Heart left ventricle (tissue), 16 donors: ENCODE measurements at regions of chr16 and their contacts with region 1.

Region 1: DNA sequence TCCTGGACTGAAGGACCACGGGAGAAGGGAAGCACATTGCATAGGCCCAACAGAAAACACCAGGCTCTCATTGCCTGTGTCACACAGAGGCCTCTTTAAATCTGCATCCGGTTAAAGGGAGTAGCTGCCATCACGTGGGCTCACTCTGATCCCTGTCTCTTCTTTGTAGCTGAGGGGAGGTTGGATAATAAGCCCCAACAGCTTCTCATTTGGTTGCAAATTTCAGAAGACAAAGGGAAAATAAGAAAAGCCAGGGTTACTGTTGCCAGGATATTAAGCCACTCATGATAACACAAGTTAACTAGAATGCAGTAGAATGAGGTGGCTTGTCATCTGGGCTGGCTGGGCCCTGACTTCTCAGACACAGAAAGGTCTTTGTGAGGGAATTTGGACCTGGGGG is 325.1 kb upstream of the ERCC4 start:
- DNase-seq: no peak
- ATAC-seq: no peak
- H3K4me3 ChIP-seq: no peak overlapping the region
- H3K27ac ChIP-seq: no peak overlapping the region
- H3K4me1 ChIP-seq: no peaks in the 10 kb centered on the region
- H3K27me3 ChIP-seq: no peaks in the 10 kb centered on the region
- CTCF ChIP-seq: no peak
- POLR2A ChIP-seq: no peak

Region 2: GRCh38 chr16:12803203-12804097 is 791.4 kb before region 1 on chr16 and contains the start of gene CPPED1:
- intact Hi-C with region 1: no loop called
- DNase-seq: peak; percentile 93 to 97 (median 97)
- ATAC-seq: peak; percentile 95 to 99 (median 98)
- H3K4me3 ChIP-seq: peak within 1 kb of the TSS; percentile 30 to 79 (median 67)
- H3K27ac ChIP-seq: peak within 1 kb of the TSS; percentile 43 to 96 (median 84)
- H3K4me1 ChIP-seq: peaks cover 0 to 51% (median 14%) of the 10 kb centered on the region in 12 donors
- H3K27me3 ChIP-seq: peaks cover 0 to 4% (median 0%) of the 10 kb centered on the region in 9 donors
- CTCF ChIP-seq: no peak
- POLR2A ChIP-seq: peak in 1 of 2 donors; percentile 48
- total RNA-seq, gene CPPED1: 5.6 to 25.1 (median 12.6) TPM

Region 3: DNA sequence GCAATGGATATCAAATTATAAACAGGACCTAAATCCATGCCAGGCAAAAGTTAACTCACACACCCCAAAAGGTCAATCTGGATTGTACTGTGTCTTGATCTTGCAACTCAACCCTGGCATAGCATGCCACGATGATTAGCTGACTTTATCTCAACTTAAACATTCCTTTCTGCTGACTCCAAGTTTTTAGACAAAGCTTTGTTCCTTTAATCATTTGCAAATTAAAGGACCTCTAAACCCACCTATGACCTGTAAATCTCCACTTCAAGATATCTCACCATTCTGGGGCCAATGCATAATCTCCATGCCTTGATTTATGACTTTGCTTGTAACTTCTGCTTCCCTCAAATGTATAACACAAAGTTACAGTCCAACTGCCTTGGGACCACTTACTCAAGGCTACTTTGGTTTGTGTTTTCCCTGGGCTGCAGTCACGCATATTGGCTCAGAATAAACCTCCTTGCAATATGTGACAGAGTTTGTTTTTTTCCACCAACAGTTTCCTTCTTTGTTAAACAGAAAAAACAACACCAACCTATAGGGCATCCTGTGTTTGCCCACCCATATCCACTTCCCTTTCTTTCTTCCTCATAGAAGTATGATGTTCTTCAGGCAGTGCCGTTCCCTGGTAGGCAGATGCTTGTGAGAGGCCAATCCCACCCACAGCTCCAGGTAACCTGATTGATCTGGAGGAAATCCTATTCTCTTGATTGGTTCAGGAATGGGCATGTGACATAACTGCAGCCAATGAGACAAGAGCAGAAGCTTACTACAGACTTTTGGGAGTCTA is 65.4 kb before region 1 on chr16:
- intact Hi-C with region 1: loop called in 1 of 10 experiments (anchors 10 kb)
- DNase-seq: no peak
- ATAC-seq: no peak
- H3K4me3 ChIP-seq: no peak overlapping the region
- H3K27ac ChIP-seq: no peak overlapping the region
- H3K4me1 ChIP-seq: no peaks in the 10 kb centered on the region
- H3K27me3 ChIP-seq: no peaks in the 10 kb centered on the region
- CTCF ChIP-seq: no peak
- POLR2A ChIP-seq: no peak

Region 4: GRCh38 chr16:13571036-13571435 is 23.8 kb before region 1 on chr16:
- intact Hi-C with region 1: no loop called
- DNase-seq: no peak
- ATAC-seq: no peak
- H3K4me3 ChIP-seq: no peak overlapping the region
- H3K27ac ChIP-seq: no peak overlapping the region
- H3K4me1 ChIP-seq: no peaks in the 10 kb centered on the region
- H3K27me3 ChIP-seq: peaks cover 0 to 7% (median 0%) of the 10 kb centered on the region in 9 donors
- CTCF ChIP-seq: no peak
- POLR2A ChIP-seq: no peak